A673 (cell line): ENCODE measurements at regions of chr15 and their contacts with region 1.

Region 1: DNA sequence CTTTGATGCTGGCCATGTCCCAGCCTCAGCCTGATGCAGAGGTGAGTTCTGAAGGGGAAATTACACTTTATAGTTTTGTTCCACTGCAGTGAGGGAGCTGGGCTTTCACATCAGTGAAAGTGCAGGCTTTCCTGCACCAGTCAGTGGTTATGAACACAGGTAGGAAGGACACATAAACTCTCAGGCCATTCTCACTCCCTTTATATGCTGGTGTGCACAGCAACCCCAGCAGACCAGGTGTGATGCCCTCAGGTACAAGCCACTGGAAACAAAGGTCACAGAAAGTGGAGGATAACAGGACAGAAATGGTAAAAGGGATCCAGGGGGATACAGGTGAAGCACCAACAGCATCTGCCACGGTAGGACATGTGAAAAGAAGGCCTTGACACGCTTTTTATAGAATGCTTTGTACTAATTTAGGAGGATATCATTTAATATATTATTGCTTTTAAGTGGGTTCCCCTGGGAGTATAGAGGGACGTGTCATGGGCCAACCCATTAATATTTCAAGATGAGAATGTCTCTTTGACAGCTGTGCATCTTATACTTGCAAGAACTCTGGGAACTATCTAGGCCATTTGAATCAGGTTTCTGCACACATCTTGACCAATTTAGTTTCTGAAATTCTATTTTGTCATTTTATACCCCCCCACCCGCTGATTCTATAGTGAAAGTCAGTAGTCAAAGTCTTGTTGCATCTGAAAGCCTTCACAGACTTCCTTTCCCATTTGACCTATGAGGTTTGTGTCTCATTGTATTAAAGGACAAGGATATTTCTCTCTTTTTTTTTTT is 25.0 kb upstream of the BLM start:
- DNase-seq: no peak
- H3K4me3 ChIP-seq: no peak overlapping the region
- H3K27ac ChIP-seq: no peak overlapping the region
- H3K4me1 ChIP-seq: peaks cover 3% of the 10 kb centered on the region
- H3K27me3 ChIP-seq: no peaks in the 10 kb centered on the region
- CTCF ChIP-seq: no peak

Region 2: DNA sequence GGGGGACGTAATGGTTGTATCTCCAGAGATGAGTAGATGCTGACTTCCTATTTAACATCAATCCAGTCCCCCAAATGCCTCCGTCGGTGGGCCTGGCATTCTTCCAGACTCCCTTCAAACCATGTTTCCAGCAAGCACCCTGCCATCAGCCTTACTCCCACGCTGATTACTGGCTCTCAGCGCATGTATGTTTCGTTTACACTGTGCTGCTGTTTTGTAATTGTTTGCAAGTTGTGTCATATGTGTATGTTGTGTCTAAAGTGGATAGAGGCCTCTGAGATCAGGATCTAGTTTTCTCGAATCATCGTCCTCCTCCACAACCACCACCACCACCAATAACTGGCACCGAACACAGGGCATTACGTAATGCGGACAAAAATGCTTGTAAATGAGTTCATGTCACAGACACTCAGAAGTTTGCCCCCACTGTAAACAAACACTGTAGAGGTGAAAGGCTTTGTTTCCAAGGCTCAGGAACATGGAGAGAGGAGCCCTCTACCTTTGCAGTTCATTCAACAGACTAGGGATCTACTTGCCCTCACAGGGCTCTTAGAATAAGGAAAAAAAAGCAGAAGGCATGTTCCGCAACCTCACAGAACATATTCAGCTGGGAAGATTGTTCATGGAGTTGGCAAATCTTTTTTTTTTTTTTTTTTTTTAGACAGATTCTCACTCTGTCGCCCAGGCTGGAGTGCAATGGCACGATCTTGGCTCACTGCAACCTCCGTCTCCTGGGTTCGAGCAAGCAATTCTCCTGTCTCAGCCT is 537.1 kb before region 1 on chr15:
- CTCF ChIA-PET with region 1: no interaction called
- POLR2A ChIA-PET with region 1: no interaction called
- intact Hi-C with region 1: no loop called
- DNase-seq: peak; percentile 35
- H3K4me3 ChIP-seq: no peak overlapping the region
- H3K27ac ChIP-seq: no peak overlapping the region
- H3K4me1 ChIP-seq: peaks cover 6% of the 10 kb centered on the region
- H3K27me3 ChIP-seq: no peaks in the 10 kb centered on the region
- CTCF ChIP-seq: no peak

Region 3: GRCh38 chr15:90320061-90320884 is 371.9 kb before region 1 on chr15:
- CTCF ChIA-PET with region 1: no interaction called
- POLR2A ChIA-PET with region 1: no interaction called
- intact Hi-C with region 1: loop called (anchors 2 kb)
- DNase-seq: peak; percentile 93
- H3K4me3 ChIP-seq: no peak overlapping the region
- H3K27ac ChIP-seq: no peak overlapping the region
- H3K4me1 ChIP-seq: peaks cover 7% of the 10 kb centered on the region
- H3K27me3 ChIP-seq: no peaks in the 10 kb centered on the region
- CTCF ChIP-seq: peak; percentile 99

Region 4: GRCh38 chr15:90648137-90649070 is 43.8 kb before region 1 on chr15:
- CTCF ChIA-PET with region 1: interaction called, 5 read pairs
- POLR2A ChIA-PET with region 1: no interaction called
- intact Hi-C with region 1: loop called (anchors 2 kb)
- DNase-seq: peak; percentile 84
- H3K4me3 ChIP-seq: no peak overlapping the region
- H3K27ac ChIP-seq: peak overlapping the region; percentile 80
- H3K4me1 ChIP-seq: peaks cover 29% of the 10 kb centered on the region
- H3K27me3 ChIP-seq: no peaks in the 10 kb centered on the region
- CTCF ChIP-seq: peak; percentile 91